GM12878 (cell line): ENCODE measurements at regions of chr5 and their contacts with region 1.

Region 1: GRCh38 chr5:127634007-127634406 is 14.9 kb upstream of the CTXN3 start:
- DNase-seq: no peak
- ATAC-seq: no peak
- H3K4me3 ChIP-seq: no peak overlapping the region
- H3K27ac ChIP-seq: no peak overlapping the region
- H3K4me1 ChIP-seq: no peaks in the 10 kb centered on the region
- H3K27me3 ChIP-seq: no peaks in the 10 kb centered on the region
- CTCF ChIP-seq: no peak
- EP300 ChIP-seq: no peak
- POLR2A ChIP-seq: no peak
- RAD21 ChIP-seq: no peak

Region 2: GRCh38 chr5:127243011-127243410 is 391.0 kb before region 1 on chr5:
- CTCF ChIA-PET with region 1: no interaction called
- POLR2A ChIA-PET with region 1: no interaction called
- RAD21 ChIA-PET with region 1: no interaction called
- SMC1A ChIA-PET with region 1: no interaction called
- in situ Hi-C with region 1: no loop called
- intact Hi-C with region 1: no loop called
- DNase-seq: no peak
- ATAC-seq: no peak
- H3K4me3 ChIP-seq: no peak overlapping the region
- H3K27ac ChIP-seq: no peak overlapping the region
- H3K4me1 ChIP-seq: no peaks in the 10 kb centered on the region
- H3K27me3 ChIP-seq: no peaks in the 10 kb centered on the region
- CTCF ChIP-seq: no peak
- EP300 ChIP-seq: no peak
- POLR2A ChIP-seq: no peak
- RAD21 ChIP-seq: no peak

Region 3: GRCh38 chr5:127645300-127645726 is 11.3 kb after region 1 on chr5:
- CTCF ChIA-PET with region 1: interaction called, 10 read pairs
- POLR2A ChIA-PET with region 1: interaction called, 3 read pairs
- RAD21 ChIA-PET with region 1: interaction called, 3 read pairs
- SMC1A ChIA-PET with region 1: interaction called, 8 read pairs
- in situ Hi-C with region 1: no loop called
- intact Hi-C with region 1: no loop called
- DNase-seq: no peak
- ATAC-seq: no peak
- H3K4me3 ChIP-seq: no peak overlapping the region
- H3K27ac ChIP-seq: no peak overlapping the region
- H3K4me1 ChIP-seq: no peaks in the 10 kb centered on the region
- H3K27me3 ChIP-seq: no peaks in the 10 kb centered on the region
- CTCF ChIP-seq: no peak
- EP300 ChIP-seq: no peak
- POLR2A ChIP-seq: no peak
- RAD21 ChIP-seq: no peak